Sciatic nerve (tissue), 2 donors: ENCODE measurements at regions of chr3 and their contacts with region 1.

Region 1: GRCh38 chr3:187164885-187165543 is 25.7 kb upstream of the RPL39L start:
- DNase-seq: no peak
- ATAC-seq: peak; percentile 54

Region 2: DNA sequence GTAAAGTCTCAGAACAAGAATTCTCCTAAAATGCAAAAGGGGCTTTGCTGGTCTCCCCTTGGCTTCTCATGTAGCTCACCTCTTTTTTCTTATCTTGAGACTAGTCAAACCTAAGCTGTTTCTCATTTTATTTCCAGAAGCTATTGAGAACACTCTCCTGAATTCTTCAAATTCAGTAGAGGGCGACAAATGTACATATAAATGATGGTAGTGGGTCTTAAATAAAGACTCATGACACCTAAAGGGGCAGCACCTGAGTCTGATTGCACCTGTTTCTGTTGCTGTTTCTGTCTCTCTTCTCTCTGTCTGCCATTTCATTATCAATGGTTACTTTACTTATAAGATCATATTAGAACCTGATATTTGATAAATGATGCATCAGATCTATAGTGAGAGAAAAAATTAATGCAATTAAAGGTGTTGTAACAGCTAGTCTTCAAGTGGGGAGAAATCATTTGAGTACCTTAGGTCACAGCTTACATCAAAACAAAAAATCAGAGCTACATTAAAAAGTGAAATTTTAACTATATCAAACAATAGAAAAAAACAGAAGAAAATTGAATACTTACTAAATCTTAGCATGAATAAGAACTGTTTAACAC is 315.5 kb before region 1 on chr3:
- intact Hi-C with region 1: loop called (anchors 10 kb)
- DNase-seq: no peak
- ATAC-seq: no peak

Region 3: GRCh38 chr3:187208159-187208558 is 43.1 kb after region 1 on chr3:
- intact Hi-C with region 1: no loop called
- DNase-seq: no peak
- ATAC-seq: no peak

Region 4: GRCh38 chr3:187227658-187228258 is 62.7 kb after region 1 on chr3:
- intact Hi-C with region 1: no loop called
- DNase-seq: no peak
- ATAC-seq: no peak